ENCODE measurements at regions of chr1 and their contacts with region 1.

Region 1: GRCh38 chr1:165871311-165872067 is 44.1 kb downstream of the UCK2 start:
- DNase-seq: peak; percentile 86
- ATAC-seq: peak; percentile 87
- H3K4me3 ChIP-seq: no peak overlapping the region
- H3K27ac ChIP-seq: peak overlapping the region; percentile 19
- H3K4me1 ChIP-seq: peaks cover 31% of the 10 kb centered on the region
- H3K27me3 ChIP-seq: no peaks in the 10 kb centered on the region
- CTCF ChIP-seq: peak; percentile 43 to 62 (median 58); a peak in 5 of 6 replicates
- EP300 ChIP-seq: peak; percentile 56 to 66; a peak in 3 of 4 replicates
- POLR2A ChIP-seq: 0 out of 2 replicates have a peak, but pooled peaks have one; percentile 23
- RAD21 ChIP-seq: peak; percentile 69

Region 2: DNA sequence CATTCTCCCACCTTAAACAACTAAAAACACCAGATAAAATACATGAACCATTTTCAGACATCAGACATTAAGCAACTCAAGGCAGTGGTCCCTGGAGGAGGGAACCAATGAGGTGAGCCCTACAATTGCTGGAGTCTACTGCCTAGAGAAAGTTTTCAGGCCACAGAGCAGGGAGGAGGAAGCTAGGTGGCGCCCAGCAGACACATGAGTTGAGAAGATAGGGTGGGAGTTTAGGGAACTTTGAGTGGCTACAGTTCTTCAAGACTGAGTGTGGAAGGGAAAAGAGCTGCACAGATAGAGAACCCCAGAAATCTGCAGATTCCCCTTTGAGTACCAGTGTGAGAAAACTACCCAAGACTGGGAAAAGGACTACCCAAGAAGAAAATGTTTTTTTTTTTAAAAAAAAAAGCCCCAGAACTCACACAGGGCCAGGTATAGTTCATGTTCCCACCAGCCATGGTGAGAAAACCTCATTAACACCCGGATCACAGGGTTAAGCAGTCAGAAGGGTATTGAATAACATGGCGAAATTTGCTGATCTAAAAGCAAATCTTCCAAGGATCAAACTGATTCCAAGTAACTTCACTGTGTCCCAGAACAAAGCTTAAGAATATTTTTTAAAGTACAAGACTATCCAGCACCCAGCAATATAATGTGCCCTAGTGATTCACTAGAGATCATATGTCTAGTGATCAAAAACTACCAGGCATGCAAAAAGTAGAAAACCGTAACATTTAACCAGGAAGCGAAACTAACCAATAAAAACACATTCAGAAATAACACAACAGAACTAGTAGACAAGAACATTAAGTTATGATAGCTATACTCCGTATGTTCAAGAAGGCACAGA is 185.1 kb before region 1 on chr1:
- CTCF ChIA-PET with region 1: interaction called, 10 read pairs
- POLR2A ChIA-PET with region 1: no interaction called
- RAD21 ChIA-PET with region 1: no interaction called
- SMC1A ChIA-PET with region 1: no interaction called
- in situ Hi-C with region 1: no loop called
- intact Hi-C with region 1: no loop called
- DNase-seq: peak; percentile 24
- ATAC-seq: peak; percentile 90
- H3K4me3 ChIP-seq: peak overlapping the region; percentile 21
- H3K27ac ChIP-seq: peak overlapping the region; percentile 77
- H3K4me1 ChIP-seq: peaks cover 10% of the 10 kb centered on the region
- H3K27me3 ChIP-seq: no peaks in the 10 kb centered on the region
- CTCF ChIP-seq: peak; percentile 25 to 44 (median 26); a peak in 3 of 6 replicates
- EP300 ChIP-seq: no peak
- POLR2A ChIP-seq: no peak
- RAD21 ChIP-seq: peak; percentile 32

Region 3: GRCh38 chr1:165768513-165769394 is 102.7 kb before region 1 on chr1 and contains the start of gene TMCO1:
- CTCF ChIA-PET with region 1: interaction called, 5 read pairs
- POLR2A ChIA-PET with region 1: interaction called, 4 read pairs
- RAD21 ChIA-PET with region 1: interaction called, 11 read pairs
- SMC1A ChIA-PET with region 1: interaction called, 12 read pairs
- in situ Hi-C with region 1: no loop called
- intact Hi-C with region 1: loop called (anchors 5 kb)
- DNase-seq: peak; percentile 93
- ATAC-seq: peak; percentile 98
- H3K4me3 ChIP-seq: peak within 1 kb of the TSS; percentile 79
- H3K27ac ChIP-seq: peak within 1 kb of the TSS; percentile 92
- H3K4me1 ChIP-seq: peaks cover 10% of the 10 kb centered on the region; the same call in 1 of the 2 replicates
- H3K27me3 ChIP-seq: no peaks in the 10 kb centered on the region
- CTCF ChIP-seq: peak in 2 of 3 experiments; percentile 15 to 16; a peak in 2 of 6 replicates
- EP300 ChIP-seq: no peak
- POLR2A ChIP-seq: peak; percentile 90
- RAD21 ChIP-seq: peak; percentile 35; the same call in 1 of the 2 replicates
- polyA plus RNA-seq, gene TMCO1: 184 to 253 TPM

Region 4: DNA sequence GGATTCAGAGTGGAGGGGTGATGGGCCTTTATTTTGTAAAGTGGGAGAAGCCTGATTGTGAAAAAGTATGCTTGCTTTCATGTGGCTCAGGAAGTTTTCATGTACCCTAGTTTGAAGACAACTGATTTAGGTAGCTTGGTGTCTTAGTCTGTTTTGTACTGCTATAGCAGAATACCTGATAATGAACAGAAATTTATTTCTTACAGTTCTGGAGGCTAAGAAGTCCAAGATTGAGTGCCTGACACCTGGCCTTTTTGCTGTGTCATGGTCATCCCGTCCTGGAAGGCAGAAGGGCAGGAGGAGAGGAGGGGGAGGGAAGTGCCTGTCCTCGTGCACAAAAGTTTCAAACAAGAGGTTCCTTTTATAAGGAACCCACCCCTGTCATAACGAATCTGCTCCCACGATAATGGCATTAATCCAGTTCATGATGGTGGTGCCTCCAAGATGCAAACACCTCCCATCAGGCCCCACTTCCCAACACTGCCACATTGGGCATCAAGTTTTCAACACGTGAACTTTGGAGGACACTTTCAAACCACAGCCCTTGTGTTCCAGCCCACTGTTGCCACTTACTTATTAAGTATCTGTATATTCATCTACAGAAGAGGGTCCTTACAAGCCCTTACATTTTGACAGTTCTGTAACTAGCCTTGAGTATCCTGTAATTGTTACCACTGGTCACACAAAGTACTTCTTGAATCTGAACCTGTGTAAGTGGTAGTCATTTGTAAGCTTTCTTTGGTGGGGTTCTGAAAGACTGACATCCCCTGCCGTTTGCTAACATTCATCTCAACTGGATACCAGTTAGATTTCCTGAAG is 34.6 kb before region 1 on chr1:
- CTCF ChIA-PET with region 1: no interaction called
- POLR2A ChIA-PET with region 1: interaction called, 5 read pairs
- RAD21 ChIA-PET with region 1: interaction called, 13 read pairs
- SMC1A ChIA-PET with region 1: interaction called, 212 read pairs
- in situ Hi-C with region 1: no loop called
- intact Hi-C with region 1: no loop called
- DNase-seq: no peak
- ATAC-seq: no peak
- H3K4me3 ChIP-seq: no peak overlapping the region
- H3K27ac ChIP-seq: no peak overlapping the region; the same call in 1 of the 2 replicates
- H3K4me1 ChIP-seq: peaks cover 14% of the 10 kb centered on the region
- H3K27me3 ChIP-seq: no peaks in the 10 kb centered on the region
- CTCF ChIP-seq: no peak
- EP300 ChIP-seq: no peak
- POLR2A ChIP-seq: no peak
- RAD21 ChIP-seq: no peak

Region 5: GRCh38 chr1:165851034-165851658 is 20.3 kb before region 1 on chr1:
- CTCF ChIA-PET with region 1: interaction called, 62 read pairs
- POLR2A ChIA-PET with region 1: interaction called, 13 read pairs
- RAD21 ChIA-PET with region 1: interaction called, 31 read pairs
- SMC1A ChIA-PET with region 1: interaction called, 212 read pairs
- in situ Hi-C with region 1: no loop called
- intact Hi-C with region 1: no loop called
- DNase-seq: no peak
- ATAC-seq: peak; percentile 88
- H3K4me3 ChIP-seq: no peak overlapping the region
- H3K27ac ChIP-seq: peak overlapping the region; percentile 37; the same call in 1 of the 2 replicates
- H3K4me1 ChIP-seq: peaks cover 36% of the 10 kb centered on the region
- H3K27me3 ChIP-seq: no peaks in the 10 kb centered on the region
- CTCF ChIP-seq: no peak
- EP300 ChIP-seq: no peak
- POLR2A ChIP-seq: no peak
- RAD21 ChIP-seq: no peak

Region 6: DNA sequence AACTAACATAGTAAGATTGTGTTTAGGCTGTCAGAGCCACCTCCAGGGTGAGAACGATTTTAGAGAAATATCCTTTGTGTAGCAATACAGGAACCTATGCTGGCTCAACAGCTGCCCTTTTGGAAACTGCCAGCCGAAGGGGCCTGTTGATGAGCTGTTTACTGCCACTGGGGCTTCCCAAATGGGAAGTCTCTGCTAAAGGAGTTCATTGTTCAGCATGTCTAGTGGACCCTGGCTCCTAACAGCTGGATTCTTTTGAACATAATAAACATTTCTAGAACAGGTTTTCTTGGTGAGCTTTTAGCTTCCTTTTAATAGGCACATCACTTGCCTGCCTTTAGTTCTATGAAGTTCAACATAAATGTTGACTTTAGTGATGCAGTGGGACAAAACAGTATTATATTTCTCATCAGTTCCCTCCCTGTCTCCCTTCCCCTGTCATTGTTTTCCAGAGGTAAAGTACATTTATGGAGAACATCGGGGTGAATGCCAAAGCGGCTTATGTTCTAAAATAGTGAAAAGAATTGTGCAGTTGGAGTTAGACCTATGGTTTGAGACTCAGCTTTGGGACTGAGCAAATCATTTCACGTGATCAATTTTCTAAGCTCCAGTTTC is 13.3 kb after region 1 on chr1:
- CTCF ChIA-PET with region 1: interaction called, 18 read pairs
- POLR2A ChIA-PET with region 1: interaction called, 5 read pairs
- RAD21 ChIA-PET with region 1: interaction called, 26 read pairs
- SMC1A ChIA-PET with region 1: interaction called, 49 read pairs
- in situ Hi-C with region 1: no loop called
- intact Hi-C with region 1: no loop called
- DNase-seq: no peak
- ATAC-seq: peak; percentile 70
- H3K4me3 ChIP-seq: no peak overlapping the region
- H3K27ac ChIP-seq: peak overlapping the region; percentile 64
- H3K4me1 ChIP-seq: peaks cover 53% of the 10 kb centered on the region
- H3K27me3 ChIP-seq: no peaks in the 10 kb centered on the region
- CTCF ChIP-seq: no peak
- EP300 ChIP-seq: no peak
- POLR2A ChIP-seq: no peak
- RAD21 ChIP-seq: no peak

Region 7: DNA sequence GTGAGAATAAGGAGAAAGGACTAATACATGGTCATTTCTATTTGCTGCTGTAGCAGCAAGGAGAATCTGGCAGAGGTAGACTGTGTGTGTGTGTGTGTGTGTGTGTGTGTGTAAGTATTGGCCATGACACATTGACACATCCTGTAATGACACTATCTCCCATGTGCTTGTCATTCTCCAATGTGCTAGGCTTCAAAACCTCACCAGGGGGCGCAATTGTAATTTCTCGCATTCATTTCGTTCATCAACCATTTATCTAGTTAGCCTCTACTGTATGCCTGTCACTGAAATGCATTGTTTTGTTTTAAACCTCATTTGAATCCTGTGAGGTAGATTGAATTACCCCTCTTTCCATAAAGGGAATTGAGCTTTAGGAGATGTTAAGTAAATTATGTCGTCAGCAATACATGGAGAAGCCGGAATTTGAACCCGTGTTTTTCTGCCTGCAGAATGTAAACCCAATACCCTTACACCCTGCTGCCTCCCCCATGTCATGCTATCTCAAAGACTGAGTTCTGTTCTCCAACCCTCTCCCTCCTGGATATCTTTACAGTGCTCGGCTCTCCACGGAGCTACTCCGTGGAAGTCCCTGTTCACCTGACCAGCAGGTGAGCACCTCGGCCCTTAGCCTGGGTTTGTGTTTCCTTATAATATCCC is 56.7 kb after region 1 on chr1:
- CTCF ChIA-PET with region 1: no interaction called
- POLR2A ChIA-PET with region 1: interaction called, 10 read pairs
- RAD21 ChIA-PET with region 1: no interaction called
- SMC1A ChIA-PET with region 1: no interaction called
- in situ Hi-C with region 1: no loop called
- intact Hi-C with region 1: no loop called
- DNase-seq: no peak
- ATAC-seq: peak; percentile 81
- H3K4me3 ChIP-seq: no peak overlapping the region
- H3K27ac ChIP-seq: no peak overlapping the region
- H3K4me1 ChIP-seq: no peaks in the 10 kb centered on the region; the same call in 1 of the 2 replicates
- H3K27me3 ChIP-seq: no peaks in the 10 kb centered on the region
- CTCF ChIP-seq: peak; percentile 71 to 78 (median 74)
- EP300 ChIP-seq: no peak
- POLR2A ChIP-seq: no peak
- RAD21 ChIP-seq: peak; percentile 87

Region 8: GRCh38 chr1:166032572-166033371 is 161.3 kb after region 1 on chr1:
- CTCF ChIA-PET with region 1: no interaction called
- POLR2A ChIA-PET with region 1: no interaction called
- RAD21 ChIA-PET with region 1: no interaction called
- SMC1A ChIA-PET with region 1: no interaction called
- in situ Hi-C with region 1: no loop called
- intact Hi-C with region 1: no loop called
- DNase-seq: no peak
- ATAC-seq: no peak
- H3K4me3 ChIP-seq: no peak overlapping the region
- H3K27ac ChIP-seq: no peak overlapping the region
- H3K4me1 ChIP-seq: no peaks in the 10 kb centered on the region
- H3K27me3 ChIP-seq: no peaks in the 10 kb centered on the region
- CTCF ChIP-seq: no peak
- EP300 ChIP-seq: no peak
- POLR2A ChIP-seq: no peak
- RAD21 ChIP-seq: no peak

Measured in GM12878 (cell line).